ENCODE measurements at regions of chr5 and their contacts with region 1.

Region 1: GRCh38 chr5:54517174-54518092 is at the start of gene SNX18:
- DNase-seq: peak; percentile 93
- ATAC-seq: peak; percentile 91
- H3K4me3 Mint-ChIP-seq: peak within 1 kb of the TSS; percentile 79
- H3K27ac Mint-ChIP-seq: no peak within 1 kb of the TSS
- H3K4me1 Mint-ChIP-seq: peaks cover 39% of the 10 kb centered on the region
- H3K27me3 Mint-ChIP-seq: peaks cover 19% of the 10 kb centered on the region
- total RNA-seq, gene SNX18: 17.1 to 19.3 TPM

Region 2: GRCh38 chr5:54595721-54596120 is 78.3 kb after region 1 on chr5:
- CTCF ChIA-PET with region 1: no interaction called
- POLR2A ChIA-PET with region 1: no interaction called
- DNase-seq: no peak
- ATAC-seq: no peak
- H3K4me3 Mint-ChIP-seq: no peak overlapping the region
- H3K27ac Mint-ChIP-seq: no peak overlapping the region
- H3K4me1 Mint-ChIP-seq: no peaks in the 10 kb centered on the region
- H3K27me3 Mint-ChIP-seq: peaks cover 6% of the 10 kb centered on the region

Region 3: GRCh38 chr5:54610197-54610944 is 92.9 kb after region 1 on chr5:
- CTCF ChIA-PET with region 1: interaction called, 13 read pairs
- POLR2A ChIA-PET with region 1: interaction called, 8 read pairs
- DNase-seq: peak; percentile 73
- ATAC-seq: peak; percentile 91
- H3K4me3 Mint-ChIP-seq: peak overlapping the region; percentile 61
- H3K27ac Mint-ChIP-seq: peak overlapping the region; percentile 93
- H3K4me1 Mint-ChIP-seq: peaks cover 29% of the 10 kb centered on the region
- H3K27me3 Mint-ChIP-seq: no peaks in the 10 kb centered on the region

Region 4: DNA sequence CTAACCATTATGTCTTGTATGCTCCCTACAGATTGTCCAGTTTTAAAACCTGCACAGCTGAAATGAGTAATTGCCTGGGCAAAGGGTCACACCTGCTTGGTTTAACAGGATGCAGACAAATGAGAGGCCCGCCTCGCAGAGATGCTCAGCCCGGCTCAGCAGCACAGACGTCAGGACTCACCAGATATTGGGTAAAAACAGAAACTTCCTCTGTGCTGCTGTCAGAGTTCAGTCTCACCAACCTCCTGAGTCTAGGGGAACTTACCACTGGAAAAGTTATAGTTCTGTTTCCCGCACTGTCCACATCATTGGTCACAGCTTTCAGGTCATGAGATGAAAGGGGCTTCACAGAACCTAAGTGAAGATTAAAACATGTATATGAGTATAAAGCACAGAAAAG is 315.4 kb after region 1 on chr5:
- CTCF ChIA-PET with region 1: interaction called, 10 read pairs
- POLR2A ChIA-PET with region 1: no interaction called
- DNase-seq: no peak
- ATAC-seq: no peak
- H3K4me3 Mint-ChIP-seq: no peak overlapping the region
- H3K27ac Mint-ChIP-seq: no peak overlapping the region
- H3K4me1 Mint-ChIP-seq: no peaks in the 10 kb centered on the region
- H3K27me3 Mint-ChIP-seq: peaks cover 22% of the 10 kb centered on the region

Region 5: GRCh38 chr5:54852007-54852406 is 334.6 kb after region 1 on chr5:
- CTCF ChIA-PET with region 1: interaction called, 40 read pairs
- POLR2A ChIA-PET with region 1: no interaction called
- DNase-seq: no peak
- ATAC-seq: no peak
- H3K4me3 Mint-ChIP-seq: no peak overlapping the region
- H3K27ac Mint-ChIP-seq: no peak overlapping the region
- H3K4me1 Mint-ChIP-seq: peaks cover 3% of the 10 kb centered on the region
- H3K27me3 Mint-ChIP-seq: peaks cover 22% of the 10 kb centered on the region

Region 6: GRCh38 chr5:54867310-54867944 is 350.0 kb after region 1 on chr5:
- CTCF ChIA-PET with region 1: interaction called, 99 read pairs
- POLR2A ChIA-PET with region 1: interaction called, 5 read pairs
- DNase-seq: no peak
- ATAC-seq: peak; percentile 49
- H3K4me3 Mint-ChIP-seq: no peak overlapping the region
- H3K27ac Mint-ChIP-seq: no peak overlapping the region
- H3K4me1 Mint-ChIP-seq: peaks cover 20% of the 10 kb centered on the region
- H3K27me3 Mint-ChIP-seq: peaks cover 41% of the 10 kb centered on the region

Region 7: GRCh38 chr5:54874373-54874921 is 357.0 kb after region 1 on chr5:
- CTCF ChIA-PET with region 1: interaction called, 10 read pairs
- POLR2A ChIA-PET with region 1: no interaction called
- DNase-seq: no peak
- ATAC-seq: no peak
- H3K4me3 Mint-ChIP-seq: no peak overlapping the region
- H3K27ac Mint-ChIP-seq: no peak overlapping the region
- H3K4me1 Mint-ChIP-seq: no peaks in the 10 kb centered on the region
- H3K27me3 Mint-ChIP-seq: peaks cover 57% of the 10 kb centered on the region

Region 8: GRCh38 chr5:54927097-54927746 is 409.8 kb after region 1 on chr5:
- CTCF ChIA-PET with region 1: no interaction called
- POLR2A ChIA-PET with region 1: no interaction called
- DNase-seq: no peak
- ATAC-seq: peak; percentile 47
- H3K4me3 Mint-ChIP-seq: no peak overlapping the region
- H3K27ac Mint-ChIP-seq: peak overlapping the region; percentile 26
- H3K4me1 Mint-ChIP-seq: peaks cover 17% of the 10 kb centered on the region
- H3K27me3 Mint-ChIP-seq: peaks cover 4% of the 10 kb centered on the region